Heart left ventricle (tissue), 16 donors: ENCODE measurements at regions of chr22 and their contacts with region 1.

Region 1: DNA sequence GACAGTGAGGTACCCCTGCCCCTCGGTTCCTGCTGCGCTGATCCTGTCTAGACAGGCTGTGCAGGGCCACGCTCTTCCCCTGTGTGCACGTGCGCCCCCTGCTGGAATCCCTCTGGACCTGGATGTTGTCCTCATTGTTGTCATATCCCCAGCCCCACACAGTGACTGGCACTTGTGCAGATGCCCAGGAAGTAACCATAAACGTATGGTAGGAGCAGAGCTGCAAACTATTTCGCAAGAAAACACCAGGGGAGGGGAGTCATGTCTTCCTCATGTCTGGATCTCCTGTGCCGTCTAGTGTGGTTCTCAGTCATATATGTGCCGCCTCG is 114.7 kb downstream of the CRYBB2 start:
- DNase-seq: peak in 4 of 5 donors; percentile 32 to 88 (median 50)
- ATAC-seq: peak in 3 of 4 donors; percentile 70 to 76 (median 75)
- H3K4me3 ChIP-seq: no peak overlapping the region
- H3K27ac ChIP-seq: no peak overlapping the region
- H3K4me1 ChIP-seq: no peaks in the 10 kb centered on the region
- H3K27me3 ChIP-seq: no peaks in the 10 kb centered on the region
- CTCF ChIP-seq: peak; percentile 31 to 81 (median 49)
- POLR2A ChIP-seq: no peak

Region 2: DNA sequence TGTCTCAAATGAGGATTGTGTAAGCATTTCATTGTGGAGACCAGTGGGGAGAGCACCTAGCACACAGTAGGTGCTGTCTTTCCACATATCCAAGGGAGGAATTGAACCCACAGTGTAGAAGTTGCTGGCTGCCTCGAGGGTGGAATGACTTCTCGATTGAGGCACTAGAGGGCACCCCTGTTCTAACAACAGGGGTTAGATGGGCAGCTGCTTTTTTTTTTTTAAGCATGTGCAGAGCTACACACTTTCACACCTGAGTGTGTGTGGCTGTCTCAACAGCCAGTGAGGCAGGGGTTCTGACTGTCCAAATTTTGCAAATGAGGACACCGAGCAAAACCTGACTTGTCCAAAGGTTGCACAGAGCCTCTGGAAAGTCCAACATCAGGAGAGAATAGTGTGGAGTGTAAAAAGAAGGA is 252.7 kb before region 1 on chr22:
- intact Hi-C with region 1: loop called in 3 of 10 experiments (anchors 10 kb)
- DNase-seq: no peak
- ATAC-seq: peak in 3 of 4 donors; percentile 11 to 41 (median 37)
- H3K4me3 ChIP-seq: no peak overlapping the region
- H3K27ac ChIP-seq: no peak overlapping the region
- H3K4me1 ChIP-seq: peaks cover 0 to 41% (median 11%) of the 10 kb centered on the region in 12 donors
- H3K27me3 ChIP-seq: no peaks in the 10 kb centered on the region
- CTCF ChIP-seq: peak; percentile 29 to 62 (median 52)
- POLR2A ChIP-seq: no peak

Region 3: GRCh38 chr22:25202290-25202921 is 131.7 kb before region 1 on chr22:
- intact Hi-C with region 1: loop called in 2 of 10 experiments (anchors 10 kb)
- DNase-seq: peak in 3 of 5 donors; percentile 26 to 45 (median 33)
- ATAC-seq: peak; percentile 39 to 70 (median 53)
- H3K4me3 ChIP-seq: no peak overlapping the region
- H3K27ac ChIP-seq: no peak overlapping the region
- H3K4me1 ChIP-seq: no peaks in the 10 kb centered on the region
- H3K27me3 ChIP-seq: no peaks in the 10 kb centered on the region
- CTCF ChIP-seq: peak; percentile 75 to 93 (median 85)
- POLR2A ChIP-seq: no peak

Region 4: DNA sequence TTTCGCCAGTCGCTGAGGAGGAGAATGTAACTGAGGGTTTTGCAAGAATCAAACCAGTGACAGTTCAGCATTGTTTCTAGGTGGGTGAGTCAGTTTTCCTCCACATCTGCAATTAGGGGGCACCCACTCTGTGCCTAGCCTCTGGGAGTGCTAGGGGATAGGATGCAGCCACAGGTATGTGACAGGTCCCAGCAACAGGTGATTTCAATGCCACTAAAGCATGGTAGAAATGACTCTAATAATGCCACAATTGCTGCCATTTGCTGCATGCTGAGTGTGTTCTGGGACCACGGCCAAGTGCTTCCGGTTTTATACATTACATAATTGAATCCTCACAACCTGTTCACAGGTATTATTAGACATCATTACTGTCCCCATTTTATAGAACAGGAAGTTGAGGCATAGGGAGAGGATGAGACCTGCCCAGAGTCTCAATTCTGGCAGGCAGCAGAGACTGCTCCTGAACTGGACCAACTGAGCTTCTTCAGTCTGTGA is 114.1 kb before region 1 on chr22:
- intact Hi-C with region 1: loop called in 1 of 10 experiments (anchors 10 kb)
- DNase-seq: no peak
- ATAC-seq: no peak
- H3K4me3 ChIP-seq: no peak overlapping the region
- H3K27ac ChIP-seq: no peak overlapping the region
- H3K4me1 ChIP-seq: no peaks in the 10 kb centered on the region
- H3K27me3 ChIP-seq: peaks cover 0 to 16% (median 3%) of the 10 kb centered on the region in 9 donors
- CTCF ChIP-seq: no peak
- POLR2A ChIP-seq: no peak

Region 5: GRCh38 chr22:25235547-25236290 is 98.4 kb before region 1 on chr22:
- intact Hi-C with region 1: loop called in 2 of 10 experiments (anchors 5 to 10 kb)
- DNase-seq: peak; percentile 72 to 86 (median 85)
- ATAC-seq: peak; percentile 58 to 95 (median 94)
- H3K4me3 ChIP-seq: peak overlapping the region in 1 of 12 donors; percentile 5
- H3K27ac ChIP-seq: no peak overlapping the region
- H3K4me1 ChIP-seq: peaks cover 0 to 5% (median 0%) of the 10 kb centered on the region in 12 donors
- H3K27me3 ChIP-seq: peaks cover 0 to 30% (median 11%) of the 10 kb centered on the region in 9 donors
- CTCF ChIP-seq: peak; percentile 40 to 76 (median 59)
- POLR2A ChIP-seq: no peak

Region 6: GRCh38 chr22:25318081-25318823 is 15.9 kb before region 1 on chr22:
- intact Hi-C with region 1: no loop called
- DNase-seq: no peak
- ATAC-seq: peak in 1 of 4 donors; percentile 29
- H3K4me3 ChIP-seq: no peak overlapping the region
- H3K27ac ChIP-seq: no peak overlapping the region
- H3K4me1 ChIP-seq: no peaks in the 10 kb centered on the region
- H3K27me3 ChIP-seq: no peaks in the 10 kb centered on the region
- CTCF ChIP-seq: no peak
- POLR2A ChIP-seq: no peak

Region 7: DNA sequence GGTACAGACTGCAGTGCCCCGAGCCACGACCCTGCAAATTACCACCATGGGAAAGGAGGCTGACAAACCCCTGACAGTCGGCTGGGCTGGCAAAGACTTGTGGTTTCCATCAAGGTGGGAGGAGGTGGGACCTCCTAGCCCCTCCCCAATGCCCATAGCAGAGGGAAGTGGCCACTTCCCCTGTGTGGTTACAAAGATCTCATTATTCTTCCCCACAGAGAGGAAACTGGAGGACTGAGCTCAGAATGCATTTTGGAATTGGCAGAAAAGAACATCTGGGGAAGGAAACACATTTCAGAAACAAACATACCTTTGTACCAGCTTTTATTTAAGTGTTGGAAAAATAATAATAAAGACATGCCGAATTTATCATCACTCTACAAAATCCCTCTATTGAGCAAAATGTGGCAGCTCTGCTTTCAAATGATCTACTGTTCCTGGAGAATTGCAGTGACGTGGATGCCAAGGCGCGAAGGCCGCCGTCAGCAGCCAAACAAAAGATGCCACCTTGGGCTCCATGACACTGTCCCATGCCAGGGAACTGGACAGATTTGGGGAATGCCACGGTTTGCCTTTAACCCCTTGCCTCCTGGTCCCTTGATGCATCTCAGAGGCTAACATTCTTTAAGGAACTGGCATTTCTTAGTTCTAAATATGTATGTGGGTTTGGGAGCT is 54.9 kb after region 1 on chr22:
- intact Hi-C with region 1: no loop called
- DNase-seq: no peak
- ATAC-seq: no peak
- H3K4me3 ChIP-seq: no peak overlapping the region
- H3K27ac ChIP-seq: no peak overlapping the region
- H3K4me1 ChIP-seq: peaks cover 0 to 58% (median 46%) of the 10 kb centered on the region in 12 donors
- H3K27me3 ChIP-seq: no peaks in the 10 kb centered on the region
- CTCF ChIP-seq: no peak
- POLR2A ChIP-seq: no peak